Activated T-helper 1 cell treated with anti-CD3 and anti-CD28 coated beads, Interleukin-12 subunit alpha, Interleukin-12 subunit beta, Interleukin-2, Interleukin-4 antibody, amounts not matched to agents 30 ng/mL and 10 ng/mL and 1 ng/mL, durations not matched to agents 14 hours and 24 hours and 36 hours (primary cell): ENCODE measurements at regions of chr18 and their contacts with region 1.

Region 1: GRCh38 chr18:47930931-47931717 is 665 bp upstream of the SMAD2 start:
- DNase-seq: peak; percentile 94
- H3K4me3 Mint-ChIP-seq: peak overlapping the region; percentile 82
- H3K27ac Mint-ChIP-seq: peak overlapping the region; percentile 89
- H3K4me1 Mint-ChIP-seq: peaks cover 39% of the 10 kb centered on the region
- H3K27me3 Mint-ChIP-seq: peaks cover 7% of the 10 kb centered on the region

Region 2: GRCh38 chr18:47870605-47871004 is 60.5 kb before region 1 on chr18:
- intact Hi-C with region 1: loop called (anchors 2 kb)
- DNase-seq: no peak
- H3K4me3 Mint-ChIP-seq: no peak overlapping the region
- H3K27ac Mint-ChIP-seq: peak overlapping the region; percentile 4
- H3K4me1 Mint-ChIP-seq: peaks cover 34% of the 10 kb centered on the region
- H3K27me3 Mint-ChIP-seq: no peaks in the 10 kb centered on the region

Region 3: DNA sequence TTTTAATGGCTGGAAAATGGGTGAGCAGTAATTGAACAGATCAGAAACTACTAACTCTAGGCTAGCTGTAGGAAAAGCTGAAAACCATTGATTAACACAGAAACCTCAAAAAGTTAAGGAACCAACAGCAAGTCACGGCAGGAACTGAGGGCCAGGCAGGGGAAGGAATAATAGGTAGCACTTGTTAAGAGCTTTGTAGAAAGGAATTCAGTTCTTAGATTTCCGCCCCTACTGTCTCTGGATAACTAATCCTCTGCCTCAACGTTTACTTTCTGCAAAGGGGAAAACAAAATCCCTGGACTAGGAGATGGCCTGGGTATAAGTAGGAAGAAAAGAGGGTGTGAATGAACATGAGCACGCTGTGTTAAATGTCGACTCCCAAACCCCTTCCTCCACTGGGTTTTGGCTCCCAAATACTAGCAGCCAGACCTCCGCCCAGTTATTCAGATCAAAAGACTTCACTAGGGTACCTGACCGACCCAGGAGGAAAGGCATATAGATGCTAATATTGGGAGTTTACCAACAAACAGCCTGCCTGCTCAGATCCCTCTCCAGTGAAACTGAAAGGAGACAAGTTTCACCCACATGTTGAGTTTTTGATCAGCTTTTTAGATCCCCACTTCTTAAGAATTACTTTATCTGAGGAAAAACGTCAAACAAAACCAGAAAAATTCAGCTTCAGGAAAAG is 13.1 kb before region 1 on chr18:
- intact Hi-C with region 1: loop called (anchors 1 kb)
- DNase-seq: no peak
- H3K4me3 Mint-ChIP-seq: peak overlapping the region; percentile 66
- H3K27ac Mint-ChIP-seq: peak overlapping the region; percentile 96
- H3K4me1 Mint-ChIP-seq: peaks cover 86% of the 10 kb centered on the region
- H3K27me3 Mint-ChIP-seq: no peaks in the 10 kb centered on the region

Region 4: DNA sequence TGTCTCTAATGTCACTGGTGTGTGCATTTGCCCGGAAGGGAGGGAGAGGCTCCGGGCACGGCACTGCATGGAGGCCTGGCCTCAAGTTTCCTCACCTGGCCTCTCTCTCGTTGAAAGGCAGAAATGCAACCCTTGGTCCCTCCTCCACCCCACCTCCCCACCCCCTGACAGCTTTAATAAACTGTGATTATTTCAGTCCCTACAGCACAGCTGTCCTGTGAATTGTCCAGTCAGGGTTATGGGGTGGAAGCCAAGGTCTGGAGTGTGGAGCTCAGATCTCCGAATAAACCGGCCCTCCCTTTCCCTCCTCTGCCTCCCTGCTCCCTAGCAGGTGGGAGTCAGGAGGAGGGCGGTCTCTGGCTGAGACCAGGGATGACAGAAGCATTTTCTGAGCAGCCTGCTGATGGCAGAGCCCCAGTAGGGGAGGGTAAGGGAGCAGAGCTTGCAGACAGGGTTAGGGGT is 198.5 kb after region 1 on chr18:
- intact Hi-C with region 1: loop called (anchors 1 kb)
- DNase-seq: no peak
- H3K4me3 Mint-ChIP-seq: no peak overlapping the region
- H3K27ac Mint-ChIP-seq: no peak overlapping the region
- H3K4me1 Mint-ChIP-seq: peaks cover 35% of the 10 kb centered on the region
- H3K27me3 Mint-ChIP-seq: peaks cover 60% of the 10 kb centered on the region

Region 5: GRCh38 chr18:48238206-48238605 is 307.1 kb after region 1 on chr18:
- intact Hi-C with region 1: no loop called
- DNase-seq: no peak
- H3K4me3 Mint-ChIP-seq: no peak overlapping the region
- H3K27ac Mint-ChIP-seq: no peak overlapping the region
- H3K4me1 Mint-ChIP-seq: peaks cover 13% of the 10 kb centered on the region
- H3K27me3 Mint-ChIP-seq: peaks cover 49% of the 10 kb centered on the region

Region 6: GRCh38 chr18:49169037-49169521 is 1238.0 kb after region 1 on chr18:
- intact Hi-C with region 1: loop called (anchors 10 kb)
- DNase-seq: no peak
- H3K4me3 Mint-ChIP-seq: no peak overlapping the region
- H3K27ac Mint-ChIP-seq: no peak overlapping the region
- H3K4me1 Mint-ChIP-seq: peaks cover 57% of the 10 kb centered on the region
- H3K27me3 Mint-ChIP-seq: no peaks in the 10 kb centered on the region